Activated CD8-positive, alpha-beta memory T cell treated with anti-CD3 and anti-CD28 coated beads, Interleukin-2, amount 10 ng/mL, durations not matched to agents 7 days and 5 days (primary cell): ENCODE measurements at regions of chr11 and their contacts with region 1.

Region 1: GRCh38 chr11:67353317-67354074 is at the start of gene POLD4:
- DNase-seq: peak; percentile 97
- ATAC-seq: peak; percentile 93
- H3K4me3 Mint-ChIP-seq: peak within 1 kb of the TSS; percentile 89
- H3K27ac Mint-ChIP-seq: peak within 1 kb of the TSS; percentile 97
- H3K4me1 Mint-ChIP-seq: peaks cover 36% of the 10 kb centered on the region
- H3K27me3 Mint-ChIP-seq: peaks cover 5% of the 10 kb centered on the region
- total RNA-seq, gene POLD4: 36.5 to 49.6 TPM

Region 2: DNA sequence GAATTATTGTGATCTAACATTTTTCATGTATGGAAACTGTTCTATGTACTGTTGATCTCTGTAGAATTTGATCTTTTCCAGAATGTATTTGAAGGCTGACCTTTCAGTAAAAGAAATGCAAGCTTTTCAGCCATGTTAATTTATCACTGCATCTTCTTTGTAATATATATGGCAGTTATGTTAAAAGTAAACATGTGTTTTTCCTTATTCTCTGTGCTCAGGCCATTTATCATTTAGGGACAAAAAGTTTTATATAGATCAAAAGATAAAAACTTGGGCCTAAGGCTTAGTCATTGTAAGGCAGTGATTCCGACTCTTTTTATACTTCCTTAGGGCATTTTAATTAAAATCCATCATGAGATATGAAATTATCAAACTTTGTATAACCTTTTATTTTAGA is 185.8 kb before region 1 on chr11:
- CTCF ChIA-PET with region 1: no interaction called
- DNase-seq: no peak
- ATAC-seq: no peak
- H3K4me3 Mint-ChIP-seq: no peak overlapping the region
- H3K27ac Mint-ChIP-seq: no peak overlapping the region
- H3K4me1 Mint-ChIP-seq: peaks cover 19% of the 10 kb centered on the region
- H3K27me3 Mint-ChIP-seq: no peaks in the 10 kb centered on the region

Region 3: DNA sequence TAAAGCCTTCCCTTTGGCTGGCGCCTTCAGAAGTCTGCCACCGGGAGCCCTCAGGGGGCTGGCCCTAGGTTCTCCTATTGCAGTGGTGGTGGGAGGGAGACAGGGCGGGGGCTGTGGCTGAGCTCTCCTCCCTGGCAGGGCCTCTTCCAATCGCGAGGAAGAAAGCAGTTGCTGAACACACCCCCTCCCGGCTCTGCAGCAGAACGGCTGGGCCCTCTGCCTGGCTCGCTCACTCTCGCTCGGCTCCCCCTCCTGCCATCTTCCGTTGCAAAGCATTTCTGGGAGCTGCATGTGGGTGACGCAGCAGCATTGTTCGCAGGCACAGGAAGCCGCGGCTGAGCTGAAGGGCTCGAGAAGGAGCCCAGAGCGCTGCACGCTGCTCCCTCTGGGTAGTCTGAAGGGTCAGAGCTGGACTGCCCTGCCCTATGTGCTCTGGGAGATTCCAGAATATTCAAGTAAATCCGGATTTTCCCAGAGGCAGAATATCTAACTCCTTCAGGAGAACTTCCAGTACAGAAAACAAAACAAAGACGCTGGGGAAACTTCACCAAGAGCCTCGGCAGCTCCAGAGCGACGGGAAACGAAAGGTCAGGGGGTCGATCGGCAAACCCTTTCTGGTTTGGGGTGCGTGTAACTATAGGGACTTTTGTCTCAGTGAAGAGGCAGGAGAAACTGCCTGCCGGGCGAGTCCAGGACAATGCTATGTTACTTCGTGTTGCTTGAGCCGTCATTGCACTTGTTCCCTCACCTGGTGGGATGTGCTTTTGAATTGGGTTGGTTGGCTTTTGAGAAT is 113.5 kb before region 1 on chr11:
- CTCF ChIA-PET with region 1: interaction called, 16 read pairs
- DNase-seq: peak; percentile 99
- ATAC-seq: peak; percentile 94
- H3K4me3 Mint-ChIP-seq: peak overlapping the region; percentile 95
- H3K27ac Mint-ChIP-seq: peak overlapping the region; percentile 93
- H3K4me1 Mint-ChIP-seq: peaks cover 44% of the 10 kb centered on the region
- H3K27me3 Mint-ChIP-seq: no peaks in the 10 kb centered on the region

Region 4: DNA sequence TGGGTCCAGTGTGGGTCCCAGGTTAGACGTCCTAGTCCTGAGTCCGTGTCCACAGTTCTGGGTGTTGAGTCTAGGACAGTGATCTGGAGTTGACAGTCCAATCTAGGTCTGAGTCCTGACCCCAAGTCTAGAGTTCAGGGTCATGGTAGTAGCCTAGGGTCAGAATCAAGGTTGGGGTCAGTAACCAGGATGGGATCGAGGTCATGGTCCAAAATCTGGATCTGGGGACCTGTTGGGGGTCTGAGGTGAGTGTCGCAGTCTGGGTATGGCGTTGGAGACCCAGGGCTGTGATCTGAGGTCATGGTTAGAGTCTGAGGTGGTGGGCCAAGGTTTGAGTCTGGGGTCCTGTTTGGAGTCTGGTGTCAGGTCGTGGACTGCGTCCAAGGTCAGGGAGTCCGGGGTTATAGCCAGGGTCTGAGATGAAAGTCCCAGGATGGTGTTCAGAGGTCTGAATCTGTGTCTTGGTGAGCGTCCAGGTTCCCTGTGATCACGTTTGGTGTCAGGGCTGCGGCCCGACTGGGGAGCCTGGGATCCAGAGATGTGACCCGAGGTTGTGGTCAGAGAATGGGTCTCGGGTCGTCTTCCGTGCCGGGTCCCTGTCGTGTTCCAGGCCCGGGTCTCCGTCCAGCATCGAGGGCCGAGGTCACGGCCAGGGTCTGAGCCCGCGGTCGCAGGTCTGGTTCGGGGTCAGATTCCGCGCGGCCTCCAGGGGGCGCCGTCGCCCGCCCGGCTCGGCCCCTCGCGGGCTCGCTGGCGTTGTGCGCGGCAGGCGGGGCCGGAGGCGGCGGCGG is 87.7 kb before region 1 on chr11:
- CTCF ChIA-PET with region 1: interaction called, 39 read pairs
- DNase-seq: peak; percentile 82
- ATAC-seq: peak; percentile 48
- H3K4me3 Mint-ChIP-seq: peak overlapping the region; percentile 62
- H3K27ac Mint-ChIP-seq: peak overlapping the region; percentile 79
- H3K4me1 Mint-ChIP-seq: peaks cover 68% of the 10 kb centered on the region
- H3K27me3 Mint-ChIP-seq: peaks cover 4% of the 10 kb centered on the region

Region 5: GRCh38 chr11:67317205-67317887 is 36.1 kb before region 1 on chr11:
- CTCF ChIA-PET with region 1: interaction called, 72 read pairs
- DNase-seq: peak; percentile 99
- ATAC-seq: peak; percentile 90
- H3K4me3 Mint-ChIP-seq: peak overlapping the region; percentile 90
- H3K27ac Mint-ChIP-seq: peak overlapping the region; percentile 98
- H3K4me1 Mint-ChIP-seq: peaks cover 27% of the 10 kb centered on the region
- H3K27me3 Mint-ChIP-seq: peaks cover 9% of the 10 kb centered on the region

Region 6: GRCh38 chr11:67337257-67337656 is 16.2 kb before region 1 on chr11:
- CTCF ChIA-PET with region 1: interaction called, 14 read pairs
- DNase-seq: no peak
- ATAC-seq: no peak
- H3K4me3 Mint-ChIP-seq: no peak overlapping the region
- H3K27ac Mint-ChIP-seq: no peak overlapping the region
- H3K4me1 Mint-ChIP-seq: no peaks in the 10 kb centered on the region
- H3K27me3 Mint-ChIP-seq: no peaks in the 10 kb centered on the region

Region 7: GRCh38 chr11:67630228-67630942 is 276.9 kb after region 1 on chr11:
- CTCF ChIA-PET with region 1: interaction called, 16 read pairs
- DNase-seq: peak; percentile 99
- ATAC-seq: peak; percentile 76
- H3K4me3 Mint-ChIP-seq: peak overlapping the region; percentile 76
- H3K27ac Mint-ChIP-seq: peak overlapping the region; percentile 87
- H3K4me1 Mint-ChIP-seq: peaks cover 13% of the 10 kb centered on the region
- H3K27me3 Mint-ChIP-seq: no peaks in the 10 kb centered on the region